Endothelial cell of umbilical vein (primary cell): ENCODE measurements at regions of chr11 and their contacts with region 1.

Region 1: DNA sequence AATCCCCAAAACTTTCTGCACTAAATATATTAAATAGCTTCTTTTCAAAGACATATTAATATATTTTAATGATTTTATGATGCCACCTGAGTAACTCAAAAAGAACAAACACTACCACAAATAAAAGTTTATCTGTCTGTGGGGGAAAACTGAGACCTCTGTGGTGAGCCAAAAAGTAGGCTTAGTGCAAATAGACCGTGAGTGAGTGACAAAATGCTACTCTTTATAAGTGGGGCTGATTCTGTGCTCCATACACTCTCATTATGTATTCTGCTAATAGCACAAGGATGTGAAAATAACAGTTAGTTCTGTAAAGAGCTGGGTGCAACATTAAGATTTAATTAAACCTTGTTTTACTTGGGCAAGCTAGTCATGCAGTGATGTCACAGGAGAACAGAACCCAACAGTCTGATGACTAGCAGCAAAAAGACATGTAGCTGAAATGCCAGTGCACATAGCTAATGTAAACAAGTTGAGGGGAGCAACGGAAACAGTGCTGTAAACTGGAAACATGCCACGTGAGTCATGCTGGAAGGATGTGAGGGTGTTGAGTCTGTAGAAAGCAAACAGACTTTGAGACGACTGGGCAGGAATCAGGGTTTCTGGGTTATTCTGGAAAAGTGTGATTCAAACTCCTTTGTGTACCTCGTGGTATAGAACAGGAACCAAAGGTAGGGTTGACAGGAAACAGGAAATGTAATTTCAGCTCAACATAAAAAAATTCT is 1130.4 kb downstream of the LRRC4C start:
- DNase-seq: peak; percentile 100
- H3K4me3 ChIP-seq: no peak overlapping the region
- H3K27ac ChIP-seq: peak overlapping the region; percentile 77
- H3K4me1 ChIP-seq: peaks cover 21% of the 10 kb centered on the region
- H3K27me3 ChIP-seq: no peaks in the 10 kb centered on the region
- CTCF ChIP-seq: no peak
- POLR2A ChIP-seq: peak; percentile 60

Region 2: DNA sequence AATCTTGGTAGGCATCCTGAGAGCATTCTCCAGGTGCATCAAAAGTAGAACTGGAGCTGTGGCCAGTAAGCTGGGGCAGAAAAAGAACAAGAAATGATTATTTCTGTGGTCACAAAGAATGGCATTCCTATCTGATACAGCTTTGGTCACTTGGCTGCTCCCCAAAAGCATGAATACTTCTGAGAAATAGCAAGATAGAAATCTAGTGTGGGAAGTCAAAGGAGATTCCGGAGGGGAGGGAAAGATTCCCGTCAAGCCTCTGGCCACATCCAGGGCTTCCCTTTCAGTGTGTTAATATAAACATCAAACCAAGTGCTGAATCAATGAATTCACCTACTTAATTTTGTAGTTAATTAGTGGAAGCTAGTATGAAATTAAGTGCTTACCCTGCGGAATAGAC is 55.0 kb before region 1 on chr11:
- CTCF ChIA-PET with region 1: no interaction called
- POLR2A ChIA-PET with region 1: no interaction called
- dilution Hi-C with region 1: no loop called
- intact Hi-C with region 1: no loop called
- DNase-seq: peak; percentile 3
- H3K4me3 ChIP-seq: no peak overlapping the region
- H3K27ac ChIP-seq: no peak overlapping the region
- H3K4me1 ChIP-seq: no peaks in the 10 kb centered on the region
- H3K27me3 ChIP-seq: no peaks in the 10 kb centered on the region
- CTCF ChIP-seq: no peak
- POLR2A ChIP-seq: no peak

Region 3: GRCh38 chr11:40293655-40294348 is 35.2 kb before region 1 on chr11:
- CTCF ChIA-PET with region 1: interaction called, 11 read pairs
- POLR2A ChIA-PET with region 1: no interaction called
- dilution Hi-C with region 1: no loop called
- intact Hi-C with region 1: no loop called
- DNase-seq: peak; percentile 87
- H3K4me3 ChIP-seq: peak overlapping the region; percentile 32 to 56 (median 54)
- H3K27ac ChIP-seq: no peak overlapping the region
- H3K4me1 ChIP-seq: no peaks in the 10 kb centered on the region
- H3K27me3 ChIP-seq: peaks cover 16 to 17% of the 10 kb centered on the region in 2 experiments
- CTCF ChIP-seq: peak; percentile 88 to 91
- POLR2A ChIP-seq: no peak